Endothelial cell of umbilical vein (primary cell): ENCODE measurements at regions of chr11 and their contacts with region 1.

Region 1: DNA sequence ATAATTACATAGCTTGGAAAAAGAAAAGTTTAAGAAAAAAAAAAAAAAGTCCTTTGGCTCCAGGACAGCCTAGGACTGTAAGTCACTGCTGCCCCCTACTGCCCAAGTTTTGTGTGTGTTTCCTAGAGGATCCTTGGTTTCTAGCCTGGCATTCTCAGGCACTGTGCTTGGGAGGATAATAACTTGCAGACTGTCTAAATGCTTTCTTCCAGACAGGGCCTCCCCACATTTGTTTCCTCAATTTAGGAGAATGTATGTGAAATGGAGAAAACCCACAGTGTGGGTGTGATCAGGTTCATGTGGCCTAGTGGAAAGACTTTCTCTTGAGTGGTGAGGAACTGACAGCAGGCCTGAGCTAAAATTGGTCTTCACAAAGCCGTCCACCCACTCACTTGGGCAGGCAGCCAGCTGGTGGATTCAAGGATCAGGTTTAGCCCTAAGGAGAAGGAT is 191.0 kb downstream of the NAV2 start:
- DNase-seq: peak; percentile 74
- H3K4me3 ChIP-seq: no peak overlapping the region
- H3K27ac ChIP-seq: no peak overlapping the region
- H3K4me1 ChIP-seq: no peaks in the 10 kb centered on the region
- H3K27me3 ChIP-seq: no peaks in the 10 kb centered on the region
- CTCF ChIP-seq: peak; percentile 79 to 82
- POLR2A ChIP-seq: no peak

Region 2: DNA sequence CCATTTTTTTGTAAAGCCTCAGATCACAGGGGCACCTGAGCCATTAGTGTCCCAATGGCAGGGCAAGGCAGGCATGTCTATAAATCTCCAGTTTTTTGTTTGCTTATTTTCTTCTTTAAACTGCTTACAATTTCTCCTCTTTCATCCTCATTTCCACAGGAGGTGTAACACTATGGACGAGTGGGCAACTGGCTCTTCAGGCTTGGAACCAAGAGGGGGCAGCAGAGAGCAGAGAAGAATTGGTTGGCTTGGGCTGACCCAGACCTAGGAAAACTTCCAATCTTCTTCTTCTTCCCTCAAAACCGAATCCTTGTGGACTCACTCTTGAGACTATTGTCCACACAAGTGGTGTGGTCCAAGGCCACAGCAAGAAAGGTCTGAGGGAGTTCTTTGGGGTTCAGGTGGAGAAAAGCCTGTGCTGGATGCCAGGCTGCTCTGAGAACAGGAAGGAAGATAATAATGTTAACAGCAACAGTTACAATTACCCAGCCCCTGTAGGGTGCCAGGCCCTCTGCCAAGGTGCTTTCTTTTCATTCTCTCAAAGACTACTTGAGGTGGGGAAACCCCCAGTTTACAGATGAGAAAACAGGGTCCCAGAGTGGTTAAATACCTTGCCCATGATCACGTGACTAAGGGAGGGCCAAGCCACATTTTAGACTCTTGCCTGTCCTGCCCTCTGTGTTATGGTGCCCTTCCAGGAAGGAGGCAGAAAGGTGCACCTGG is 592.2 kb before region 1 on chr11:
- CTCF ChIA-PET with region 1: interaction called, 4 read pairs
- POLR2A ChIA-PET with region 1: no interaction called
- dilution Hi-C with region 1: no loop called
- intact Hi-C with region 1: loop called (anchors 10 kb)
- DNase-seq: peak; percentile 62
- H3K4me3 ChIP-seq: no peak overlapping the region
- H3K27ac ChIP-seq: no peak overlapping the region
- H3K4me1 ChIP-seq: no peaks in the 10 kb centered on the region
- H3K27me3 ChIP-seq: peaks cover 8 to 14% of the 10 kb centered on the region in 2 experiments
- CTCF ChIP-seq: peak; percentile 90 to 97
- POLR2A ChIP-seq: no peak

Region 3: GRCh38 chr11:19712281-19713220 is 191.1 kb before region 1 on chr11 and contains the start of gene NAV2:
- CTCF ChIA-PET with region 1: interaction called, 10 read pairs
- POLR2A ChIA-PET with region 1: no interaction called
- dilution Hi-C with region 1: no loop called
- intact Hi-C with region 1: no loop called
- DNase-seq: peak; percentile 93
- H3K4me3 ChIP-seq: peak within 1 kb of the TSS; percentile 56 to 86 (median 84)
- H3K27ac ChIP-seq: peak within 1 kb of the TSS; percentile 93
- H3K4me1 ChIP-seq: peaks cover 40% of the 10 kb centered on the region
- H3K27me3 ChIP-seq: no peaks in the 10 kb centered on the region
- CTCF ChIP-seq: no peak
- POLR2A ChIP-seq: peak; percentile 98
- total RNA-seq, gene NAV2: 45.8 and 68.0 TPM in 2 replicates

Region 4: DNA sequence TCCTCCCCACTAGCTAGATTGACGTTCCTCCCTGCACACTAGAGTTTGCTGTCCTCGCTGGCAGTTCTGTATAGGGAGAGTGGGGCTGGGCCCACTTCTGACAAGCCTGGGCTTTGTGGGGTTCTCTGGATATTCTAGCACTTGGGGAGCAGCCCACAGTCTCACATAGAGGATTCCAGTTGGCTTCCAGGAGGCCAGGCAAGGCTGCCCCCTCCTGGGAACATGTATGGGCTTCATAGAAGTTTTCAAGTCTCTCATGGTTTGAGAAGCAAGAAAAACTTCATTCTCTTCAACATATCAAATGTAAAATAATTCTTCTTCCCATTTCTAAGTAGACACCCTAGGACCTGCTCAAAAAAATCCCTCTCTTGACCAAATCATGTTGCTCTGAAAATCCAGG is 103.5 kb before region 1 on chr11:
- CTCF ChIA-PET with region 1: interaction called, 14 read pairs
- POLR2A ChIA-PET with region 1: no interaction called
- dilution Hi-C with region 1: no loop called
- intact Hi-C with region 1: loop called (anchors 5 kb)
- DNase-seq: peak; percentile 36
- H3K4me3 ChIP-seq: no peak overlapping the region
- H3K27ac ChIP-seq: no peak overlapping the region
- H3K4me1 ChIP-seq: no peaks in the 10 kb centered on the region
- H3K27me3 ChIP-seq: no peaks in the 10 kb centered on the region
- CTCF ChIP-seq: peak; percentile 14 to 47
- POLR2A ChIP-seq: no peak

Region 5: GRCh38 chr11:19938169-19938856 is 34.7 kb after region 1 on chr11:
- CTCF ChIA-PET with region 1: interaction called, 3 read pairs
- POLR2A ChIA-PET with region 1: no interaction called
- dilution Hi-C with region 1: no loop called
- intact Hi-C with region 1: loop called (anchors 1 kb)
- DNase-seq: peak; percentile 71
- H3K4me3 ChIP-seq: no peak overlapping the region
- H3K27ac ChIP-seq: no peak overlapping the region
- H3K4me1 ChIP-seq: peaks cover 9% of the 10 kb centered on the region
- H3K27me3 ChIP-seq: no peaks in the 10 kb centered on the region
- CTCF ChIP-seq: peak; percentile 79 to 88
- POLR2A ChIP-seq: no peak

Region 6: GRCh38 chr11:20355221-20356219 is 451.9 kb after region 1 on chr11:
- CTCF ChIA-PET with region 1: interaction called, 8 read pairs
- POLR2A ChIA-PET with region 1: interaction called, 3 read pairs
- dilution Hi-C with region 1: no loop called
- intact Hi-C with region 1: loop called (anchors 1 kb)
- DNase-seq: peak; percentile 64
- H3K4me3 ChIP-seq: no peak overlapping the region
- H3K27ac ChIP-seq: no peak overlapping the region
- H3K4me1 ChIP-seq: peaks cover 6% of the 10 kb centered on the region
- H3K27me3 ChIP-seq: peaks cover 2 to 10% of the 10 kb centered on the region in 2 experiments
- CTCF ChIP-seq: peak; percentile 47 to 68
- POLR2A ChIP-seq: no peak